ENCODE measurements at regions of chr1 and their contacts with region 1.

Region 1: DNA sequence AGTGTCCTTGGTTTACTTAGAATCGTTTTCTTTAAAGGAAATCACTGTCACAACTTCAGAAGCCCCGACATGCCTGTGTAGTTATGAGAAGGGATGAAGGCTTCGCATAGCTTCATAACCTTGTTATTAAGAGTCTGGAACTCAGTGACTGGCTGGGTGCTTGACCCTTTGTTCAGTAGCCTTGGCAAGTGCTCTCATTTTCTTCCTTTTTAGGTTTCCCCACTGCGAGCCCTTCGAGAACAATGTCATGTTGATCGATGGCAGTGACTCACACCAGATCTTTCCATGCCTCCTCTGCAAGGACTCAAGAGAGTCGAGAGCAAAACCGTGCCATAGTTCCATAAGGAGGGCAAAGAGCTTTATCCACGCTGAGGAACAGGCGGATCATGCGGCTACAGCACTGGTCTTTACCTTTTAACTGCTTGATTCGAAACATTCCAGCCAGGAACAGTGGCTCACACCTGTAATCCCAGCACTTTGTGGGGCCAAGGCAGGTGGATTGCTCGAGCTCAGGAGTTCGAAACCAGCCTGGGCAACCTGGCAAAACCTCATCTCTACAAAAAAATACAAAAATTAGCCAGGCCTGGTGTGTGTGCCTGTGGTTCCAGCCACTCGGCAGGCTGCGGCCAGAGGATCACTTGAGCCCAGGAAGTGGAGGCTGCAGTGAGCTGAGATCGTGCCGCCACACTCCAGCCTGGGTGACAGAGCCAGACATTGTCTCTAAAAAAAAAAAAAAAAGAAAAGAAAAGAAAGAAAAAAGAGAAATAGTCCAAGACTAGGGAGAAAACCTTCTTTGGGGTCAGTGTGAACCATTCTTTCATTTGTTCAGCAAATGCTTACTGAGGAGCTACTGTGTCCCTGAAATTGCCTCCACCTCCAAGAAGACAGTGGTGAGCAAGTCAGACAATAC is 95.4 kb upstream of the ERRFI1 start:
- DNase-seq: no peak

Region 2: GRCh38 chr1:8109226-8109625 is 12.3 kb before region 1 on chr1:
- CTCF ChIA-PET with region 1: no interaction called
- POLR2A ChIA-PET with region 1: no interaction called
- DNase-seq: no peak

Region 3: GRCh38 chr1:8133657-8134430 is 12.3 kb after region 1 on chr1:
- CTCF ChIA-PET with region 1: no interaction called
- POLR2A ChIA-PET with region 1: interaction called, 13 read pairs
- DNase-seq: no peak

Measured in HEK293T (cell line).